ENCODE measurements at regions of chr17 and their contacts with region 1.

Region 1: DNA sequence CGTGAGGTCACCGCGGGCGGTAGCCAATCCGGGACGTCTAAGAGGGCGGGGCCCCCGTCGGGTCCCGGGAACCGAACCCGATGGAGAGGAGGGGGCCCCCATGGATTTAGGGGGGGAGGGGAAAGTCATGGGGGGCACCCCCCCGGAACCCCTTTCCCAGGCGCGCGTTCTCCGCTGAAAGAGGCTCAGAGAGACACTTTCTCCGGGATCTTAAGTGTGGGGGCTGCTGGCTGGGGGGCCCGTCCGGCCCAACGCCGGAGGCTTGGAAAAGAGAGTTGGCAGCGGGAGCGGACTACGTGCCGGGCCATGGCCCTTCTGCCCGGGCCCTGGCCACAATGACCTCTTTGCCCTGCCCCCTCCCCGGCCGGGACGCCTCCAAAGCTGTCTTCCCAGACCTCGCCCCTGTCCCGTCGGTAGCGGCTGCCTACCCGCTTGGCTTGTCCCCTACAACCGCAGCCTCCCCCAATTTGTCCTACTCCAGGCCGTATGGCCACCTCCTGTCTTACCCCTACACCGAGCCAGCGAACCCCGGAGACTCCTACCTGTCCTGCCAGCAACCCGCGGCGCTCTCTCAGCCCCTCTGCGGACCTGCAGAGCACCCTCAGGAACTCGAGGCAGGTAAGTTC is at the start of gene DLX4:
- DNase-seq: peak in 1 of 2 experiments; percentile 81
- H3K4me3 ChIP-seq: peak within 1 kb of the TSS; percentile 53 to 78 (median 62)
- H3K27ac ChIP-seq: no peak within 1 kb of the TSS
- H3K4me1 ChIP-seq: peaks cover 0 to 38% (median 25%) of the 10 kb centered on the region in 4 experiments; a peak in 6 of 7 replicates
- H3K27me3 ChIP-seq: peaks cover 91 to 100% (median 96%) of the 10 kb centered on the region in 4 experiments
- CTCF ChIP-seq: no peak
- EP300 ChIP-seq: no peak
- POLR2A ChIP-seq: no peak
- RAD21 ChIP-seq: no peak
- total RNA-seq, gene DLX4: 0.80 and 0.88 TPM in 2 replicates

Region 2: GRCh38 chr17:49899191-49899485 is 70.1 kb before region 1 on chr17:
- CTCF ChIA-PET with region 1: interaction called, 11 read pairs
- POLR2A ChIA-PET with region 1: no interaction called
- DNase-seq: peak in 1 of 2 experiments; percentile 70
- H3K4me3 ChIP-seq: no peak overlapping the region
- H3K27ac ChIP-seq: no peak overlapping the region
- H3K4me1 ChIP-seq: peaks cover 4 to 19% (median 14%) of the 10 kb centered on the region in 4 experiments
- H3K27me3 ChIP-seq: peaks cover 5 to 33% (median 32%) of the 10 kb centered on the region in 4 experiments
- CTCF ChIP-seq: peak; percentile 39 to 80 (median 64)
- EP300 ChIP-seq: no peak
- POLR2A ChIP-seq: no peak
- RAD21 ChIP-seq: peak; percentile 63 to 79

Region 3: GRCh38 chr17:49941427-49941826 is 27.8 kb before region 1 on chr17:
- CTCF ChIA-PET with region 1: no interaction called
- POLR2A ChIA-PET with region 1: no interaction called
- DNase-seq: no peak
- H3K4me3 ChIP-seq: no peak overlapping the region
- H3K27ac ChIP-seq: no peak overlapping the region
- H3K4me1 ChIP-seq: peaks cover 0 to 6% (median 3%) of the 10 kb centered on the region in 4 experiments; a peak in 3 of 7 replicates
- H3K27me3 ChIP-seq: peaks cover 0 to 8% (median 0%) of the 10 kb centered on the region in 4 experiments; a peak in 2 of 7 replicates
- CTCF ChIP-seq: no peak
- EP300 ChIP-seq: no peak
- POLR2A ChIP-seq: no peak
- RAD21 ChIP-seq: no peak

Region 4: GRCh38 chr17:49980703-49981197 is 11.5 kb after region 1 on chr17:
- CTCF ChIA-PET with region 1: interaction called, 398 read pairs
- POLR2A ChIA-PET with region 1: interaction called, 6 read pairs
- DNase-seq: peak; percentile 64 to 72
- H3K4me3 ChIP-seq: no peak overlapping the region
- H3K27ac ChIP-seq: no peak overlapping the region
- H3K4me1 ChIP-seq: peaks cover 3 to 25% (median 14%) of the 10 kb centered on the region in 4 experiments
- H3K27me3 ChIP-seq: peaks cover 1 to 37% (median 18%) of the 10 kb centered on the region in 4 experiments
- CTCF ChIP-seq: no peak
- EP300 ChIP-seq: no peak
- POLR2A ChIP-seq: no peak
- RAD21 ChIP-seq: 0 out of 4 replicates have a peak, but pooled peaks of 1 of the 2 experiments have one; percentile 13